WTC11 (cell line): ENCODE measurements at regions of chr15 and their contacts with region 1.

Region 1: GRCh38 chr15:69225355-69226025 is 65.1 kb downstream of the GLCE start:
- DNase-seq: no peak
- ATAC-seq: 0 out of 2 replicates have a peak, but pooled peaks have one; percentile 38
- H3K4me3 Mint-ChIP-seq: no peak overlapping the region
- H3K27ac Mint-ChIP-seq: no peak overlapping the region
- H3K4me1 Mint-ChIP-seq: peaks cover 15% of the 10 kb centered on the region
- H3K27me3 Mint-ChIP-seq: no peaks in the 10 kb centered on the region
- CTCF ChIP-seq: no peak

Region 2: GRCh38 chr15:69213786-69214185 is 11.7 kb before region 1 on chr15:
- CTCF ChIA-PET with region 1: interaction called, 10 read pairs
- POLR2A ChIA-PET with region 1: no interaction called
- DNase-seq: no peak
- ATAC-seq: no peak
- H3K4me3 Mint-ChIP-seq: no peak overlapping the region
- H3K27ac Mint-ChIP-seq: no peak overlapping the region
- H3K4me1 Mint-ChIP-seq: no peaks in the 10 kb centered on the region
- H3K27me3 Mint-ChIP-seq: no peaks in the 10 kb centered on the region
- CTCF ChIP-seq: peak; percentile 28; the same call in 1 of the 2 replicates